ENCODE measurements at regions of chr9 and their contacts with region 1.

Region 1: DNA sequence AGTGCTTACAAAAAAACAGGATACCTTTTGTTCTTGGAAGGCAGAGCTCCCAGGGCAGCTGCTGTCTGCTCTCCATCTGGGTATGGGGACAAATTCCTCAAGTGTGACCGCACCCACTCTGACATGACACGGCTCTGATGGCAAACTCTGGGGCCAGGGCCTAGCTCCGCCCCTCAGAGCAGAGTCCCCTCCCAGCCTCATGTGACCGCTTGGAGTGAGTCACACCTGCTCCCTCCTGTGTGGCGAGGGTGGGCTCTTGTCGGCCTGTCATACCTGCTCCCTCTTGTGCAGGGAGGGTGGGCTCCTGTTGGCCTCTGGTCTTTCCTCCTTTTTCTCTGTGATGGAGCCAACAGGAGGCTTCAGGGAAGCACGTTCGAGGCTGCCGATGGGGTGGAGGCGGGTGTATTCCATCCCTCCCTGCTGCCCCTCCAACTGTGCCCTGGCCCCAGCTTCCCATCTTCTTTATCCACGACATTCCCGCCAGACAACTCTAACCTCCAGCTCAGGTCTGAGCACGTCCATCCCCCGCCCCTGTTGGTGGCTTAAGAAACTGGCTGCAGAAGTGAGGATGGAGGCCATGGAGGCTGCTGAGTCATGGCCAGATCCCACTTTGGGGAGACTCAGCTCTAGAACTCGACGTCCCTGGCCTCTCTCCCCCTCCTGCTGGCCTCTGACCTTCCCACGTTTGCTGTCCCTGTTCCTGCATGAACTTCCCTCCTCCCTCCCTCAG is 65.3 kb downstream of the OLFM1 start:
- DNase-seq: no peak
- H3K4me3 Mint-ChIP-seq: no peak overlapping the region
- H3K27ac Mint-ChIP-seq: no peak overlapping the region
- H3K4me1 Mint-ChIP-seq: no peaks in the 10 kb centered on the region
- H3K27me3 Mint-ChIP-seq: peaks cover 14% of the 10 kb centered on the region

Region 2: GRCh38 chr9:135103001-135103446 is 49.7 kb before region 1 on chr9:
- CTCF ChIA-PET with region 1: no interaction called
- intact Hi-C with region 1: loop called (anchors 5 kb)
- DNase-seq: no peak
- H3K4me3 Mint-ChIP-seq: no peak overlapping the region
- H3K27ac Mint-ChIP-seq: no peak overlapping the region
- H3K4me1 Mint-ChIP-seq: no peaks in the 10 kb centered on the region
- H3K27me3 Mint-ChIP-seq: peaks cover 25% of the 10 kb centered on the region

Measured in activated naive CD4-positive, alpha-beta T cell treated with anti-CD3 and anti-CD28 coated beads for 36 hours (primary cell).